AG04449 (cell line): ENCODE measurements at regions of chr16 and their contacts with region 1.

Region 1: DNA sequence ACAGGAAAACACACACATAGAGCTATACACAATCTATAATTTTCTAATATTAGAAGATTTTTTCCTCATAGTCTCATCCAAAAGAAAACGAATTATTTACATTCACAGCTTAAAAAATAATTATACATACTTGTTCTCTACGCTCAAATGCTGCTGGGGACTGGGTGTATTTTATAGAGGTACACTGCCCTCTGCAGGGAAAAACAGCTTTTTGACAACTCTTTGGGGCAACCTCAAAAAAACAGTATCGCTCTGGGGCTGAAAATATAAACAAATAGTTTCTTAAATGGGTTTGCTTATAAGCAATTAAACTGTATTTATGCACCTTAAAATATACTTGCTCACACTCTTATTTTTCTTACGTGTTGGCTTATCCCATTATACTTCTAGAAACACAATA is 261.8 kb upstream of the PSMD7 start:
- DNase-seq: no peak
- H3K4me3 ChIP-seq: no peak overlapping the region
- CTCF ChIP-seq: no peak

Region 2: GRCh38 chr16:74015953-74016352 is 18.9 kb before region 1 on chr16:
- CTCF ChIA-PET with region 1: no interaction called
- POLR2A ChIA-PET with region 1: no interaction called
- DNase-seq: no peak
- H3K4me3 ChIP-seq: no peak overlapping the region
- CTCF ChIP-seq: no peak

Region 3: DNA sequence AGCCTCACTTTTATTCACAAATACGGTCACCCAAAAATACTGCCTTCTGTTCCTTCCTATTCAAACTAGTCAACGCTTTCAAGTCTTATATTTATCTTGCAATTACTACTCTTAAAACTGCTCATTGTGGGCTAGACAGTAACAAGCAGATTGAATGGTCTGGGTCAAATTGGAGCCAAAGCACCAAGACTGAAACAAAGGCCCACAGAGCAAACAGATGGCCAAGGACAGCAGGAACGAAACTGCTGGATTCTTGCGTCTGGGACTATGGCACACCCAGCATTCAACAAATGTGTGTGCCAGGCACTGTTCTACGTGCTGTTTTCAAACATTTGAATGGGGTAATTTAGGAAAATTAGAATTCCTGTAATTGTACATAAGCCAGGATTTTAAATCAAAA is 11.7 kb after region 1 on chr16:
- CTCF ChIA-PET with region 1: interaction called, 17 read pairs
- POLR2A ChIA-PET with region 1: no interaction called
- DNase-seq: no peak
- H3K4me3 ChIP-seq: no peak overlapping the region
- CTCF ChIP-seq: no peak